ENCODE measurements at regions of chr17 and their contacts with region 1.

Region 1: GRCh38 chr17:76726231-76726775 is at the start of gene JMJD6:
- DNase-seq: peak; percentile 79 to 95
- H3K4me3 ChIP-seq: peak within 1 kb of the TSS; percentile 78
- H3K27ac ChIP-seq: peak within 1 kb of the TSS; percentile 81
- H3K4me1 ChIP-seq: peaks cover 12% of the 10 kb centered on the region
- H3K27me3 ChIP-seq: no peaks in the 10 kb centered on the region
- CTCF ChIP-seq: no peak
- total RNA-seq, gene JMJD6: 19.4 and 25.2 TPM in 2 replicates

Region 2: GRCh38 chr17:76887802-76888201 is 161.5 kb after region 1 on chr17:
- CTCF ChIA-PET with region 1: interaction called, 13 read pairs
- POLR2A ChIA-PET with region 1: no interaction called
- intact Hi-C with region 1: no loop called
- DNase-seq: no peak
- H3K4me3 ChIP-seq: no peak overlapping the region
- H3K27ac ChIP-seq: no peak overlapping the region
- H3K4me1 ChIP-seq: no peaks in the 10 kb centered on the region
- H3K27me3 ChIP-seq: no peaks in the 10 kb centered on the region
- CTCF ChIP-seq: no peak

Region 3: DNA sequence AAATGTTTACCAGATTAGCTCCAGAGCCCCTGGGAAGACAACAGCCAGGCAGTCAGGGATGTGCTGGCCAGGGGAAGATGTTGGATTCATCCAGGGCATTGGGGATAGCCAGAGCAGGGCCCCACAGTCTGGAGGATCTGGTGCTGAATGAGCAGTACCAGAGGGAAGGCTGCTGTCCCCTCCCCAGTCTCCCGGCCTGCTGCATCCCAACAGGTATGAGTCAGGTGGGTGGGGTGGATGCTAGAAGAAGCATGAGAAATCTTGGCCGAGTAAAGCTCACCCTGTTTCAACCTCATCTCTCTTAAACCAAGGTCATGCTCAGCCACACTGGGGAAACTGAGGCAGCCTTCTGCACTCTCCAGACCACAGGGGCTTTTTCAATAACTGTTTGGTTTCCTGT is 342.6 kb after region 1 on chr17:
- CTCF ChIA-PET with region 1: no interaction called
- POLR2A ChIA-PET with region 1: no interaction called
- intact Hi-C with region 1: loop called (anchors 5 kb)
- DNase-seq: peak; percentile 53 to 56
- H3K4me3 ChIP-seq: no peak overlapping the region
- H3K27ac ChIP-seq: no peak overlapping the region
- H3K4me1 ChIP-seq: 0 out of 2 replicates have a peak, but pooled peaks cover 6% of the 10 kb centered on the region
- H3K27me3 ChIP-seq: peaks cover 7% of the 10 kb centered on the region
- CTCF ChIP-seq: no peak

Measured in PC-9 (cell line).